BJ (cell line): ENCODE measurements at regions of chr4 and their contacts with region 1.

Region 1: DNA sequence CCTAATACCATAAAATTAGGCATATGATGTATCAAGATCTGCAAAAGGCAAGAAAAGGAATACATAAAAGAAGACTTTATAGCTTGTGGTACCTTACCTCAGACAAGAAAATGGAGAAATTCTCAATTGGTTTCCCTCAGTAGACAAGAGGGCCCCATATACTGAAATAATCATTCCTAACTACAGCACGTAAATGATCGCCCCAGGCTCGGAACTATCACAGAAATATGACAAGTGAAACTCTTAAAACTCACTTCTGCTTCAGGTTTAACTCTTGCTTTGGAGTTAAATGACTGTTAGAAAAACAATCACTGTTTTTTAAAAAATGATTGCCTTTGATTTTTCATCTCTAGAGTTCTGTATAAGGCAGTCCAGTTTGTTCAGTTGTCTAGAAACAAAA is 38.6 kb upstream of the NAP1L5 start:
- DNase-seq: no peak
- H3K4me3 ChIP-seq: no peak overlapping the region
- H3K27me3 ChIP-seq: no peaks in the 10 kb centered on the region
- CTCF ChIP-seq: no peak

Region 2: DNA sequence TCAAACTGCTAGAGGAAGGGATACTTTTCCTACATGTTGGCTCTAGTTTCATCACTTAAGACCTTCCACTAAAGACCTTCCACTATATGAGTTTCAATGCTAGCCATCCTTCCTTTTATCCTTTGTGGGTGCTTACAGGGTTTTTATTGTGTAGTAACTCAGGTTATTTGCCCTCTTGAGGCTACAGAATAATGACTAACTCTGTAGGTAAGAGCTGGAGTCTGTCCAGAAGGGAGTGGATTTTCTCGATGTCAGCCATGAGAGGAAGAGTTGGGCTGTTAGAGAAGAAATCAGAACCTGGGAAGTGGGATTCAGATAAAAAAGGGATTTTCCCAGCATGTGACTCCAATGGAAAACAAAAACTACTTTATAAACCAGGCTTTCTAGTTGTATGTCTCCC is 306.9 kb before region 1 on chr4:
- CTCF ChIA-PET with region 1: no interaction called
- POLR2A ChIA-PET with region 1: no interaction called
- DNase-seq: no peak
- H3K4me3 ChIP-seq: no peak overlapping the region
- H3K27me3 ChIP-seq: no peaks in the 10 kb centered on the region
- CTCF ChIP-seq: no peak

Region 3: DNA sequence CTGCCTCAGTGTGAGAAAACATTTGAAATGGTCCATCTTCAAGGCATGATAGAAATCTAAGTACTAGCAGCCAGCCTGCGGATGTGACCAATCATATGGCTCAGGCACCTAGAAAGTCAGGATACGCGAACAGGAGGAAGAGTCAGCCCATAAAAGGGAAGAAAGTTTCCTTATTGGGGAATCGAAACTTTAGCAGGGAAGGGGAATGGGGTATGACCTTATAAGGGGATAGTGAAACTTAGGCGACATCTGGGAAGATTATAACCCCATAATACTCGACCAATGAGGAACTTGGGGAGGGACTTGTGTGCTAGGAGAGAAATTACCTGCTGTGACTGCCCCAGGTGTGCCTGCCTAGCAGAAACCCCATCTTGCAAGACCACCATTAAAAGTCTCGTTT is 186.4 kb before region 1 on chr4:
- CTCF ChIA-PET with region 1: no interaction called
- POLR2A ChIA-PET with region 1: interaction called, 13 read pairs
- DNase-seq: no peak
- H3K4me3 ChIP-seq: no peak overlapping the region
- H3K27me3 ChIP-seq: no peaks in the 10 kb centered on the region
- CTCF ChIP-seq: no peak

Region 4: DNA sequence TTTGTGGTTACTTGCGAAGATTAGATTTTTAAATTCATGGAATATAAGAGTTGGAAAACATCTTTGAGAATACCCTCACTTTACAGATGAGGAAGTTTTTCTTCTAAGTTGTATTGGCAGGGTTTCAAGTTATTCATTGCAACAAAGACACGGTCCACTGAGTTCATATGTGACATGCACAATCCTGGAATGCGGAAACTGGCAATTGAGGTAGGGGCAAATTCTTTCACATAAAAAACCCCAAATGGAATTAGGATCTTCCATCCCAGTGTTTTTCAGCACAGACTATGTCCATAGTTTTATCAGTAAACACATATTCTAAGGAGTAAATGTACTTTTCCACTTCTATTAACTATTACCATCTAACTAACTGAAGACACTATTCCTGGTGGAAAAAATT is 43.2 kb after region 1 on chr4:
- CTCF ChIA-PET with region 1: no interaction called
- POLR2A ChIA-PET with region 1: no interaction called
- DNase-seq: no peak
- H3K4me3 ChIP-seq: no peak overlapping the region
- H3K27me3 ChIP-seq: no peaks in the 10 kb centered on the region
- CTCF ChIP-seq: no peak

Region 5: DNA sequence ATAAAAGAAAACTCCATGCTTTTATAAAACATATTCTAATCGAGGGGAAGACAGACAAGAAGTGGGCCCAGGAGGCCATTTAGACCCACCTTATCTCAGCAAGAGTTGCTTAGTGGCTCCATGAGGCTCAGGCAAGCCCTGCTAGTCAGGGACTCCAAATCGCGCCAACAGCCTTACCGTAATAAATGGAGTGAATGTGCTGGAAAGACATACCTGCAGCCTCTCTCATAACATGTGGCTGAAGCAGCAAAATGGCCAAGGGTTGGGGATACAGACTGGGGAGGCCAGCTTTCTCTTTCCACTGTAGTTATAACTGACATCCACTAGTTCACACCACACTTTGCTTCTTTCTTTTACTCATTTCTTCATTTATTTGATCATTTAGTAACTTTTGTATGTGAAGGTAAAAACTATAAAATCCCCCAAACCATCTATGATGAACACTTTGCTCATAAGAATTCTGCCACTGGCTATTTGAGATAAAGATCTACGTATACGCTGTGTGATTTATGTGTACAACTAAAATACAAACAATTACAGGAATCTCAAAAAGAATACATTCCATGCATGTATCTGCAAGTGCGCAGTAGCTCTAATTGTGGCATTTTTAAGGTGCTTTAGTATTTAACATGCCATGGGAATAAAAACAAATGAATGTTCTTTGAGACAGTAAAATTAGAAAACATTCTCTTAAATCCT is 118.1 kb after region 1 on chr4:
- CTCF ChIA-PET with region 1: no interaction called
- POLR2A ChIA-PET with region 1: no interaction called
- DNase-seq: no peak
- H3K4me3 ChIP-seq: no peak overlapping the region
- H3K27me3 ChIP-seq: no peaks in the 10 kb centered on the region
- CTCF ChIP-seq: no peak

Region 6: DNA sequence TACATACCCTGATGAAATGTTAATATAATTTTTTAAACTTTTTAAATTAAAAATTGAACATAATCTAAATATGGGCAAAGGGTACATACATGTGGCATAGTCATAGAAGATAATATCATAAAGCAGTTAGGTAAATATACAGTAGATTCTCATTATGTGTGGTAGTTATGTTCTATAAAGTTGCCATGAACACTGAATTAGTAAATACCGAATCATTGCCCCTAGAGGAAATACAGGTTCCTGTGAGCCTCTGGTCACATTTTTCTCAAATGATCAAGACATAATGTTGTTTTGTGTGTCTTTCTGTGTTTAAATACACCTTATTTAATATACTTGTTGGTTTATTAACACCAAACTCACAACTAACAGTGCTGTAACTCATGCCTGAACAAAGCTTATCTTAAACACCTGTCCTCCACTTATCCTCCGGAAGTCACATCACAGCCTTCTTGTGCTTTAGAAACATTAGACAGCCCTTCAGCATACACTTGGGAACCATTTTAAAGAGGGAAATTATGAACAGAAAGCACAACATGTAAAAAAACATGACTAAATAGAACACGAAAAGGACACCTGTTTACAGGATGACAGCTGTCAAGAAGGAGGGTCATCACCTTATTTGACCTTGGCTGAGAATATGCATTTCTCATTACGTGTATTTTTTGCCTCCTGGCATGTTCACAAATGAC is 130.7 kb after region 1 on chr4:
- CTCF ChIA-PET with region 1: no interaction called
- POLR2A ChIA-PET with region 1: no interaction called
- DNase-seq: peak; percentile 5
- H3K4me3 ChIP-seq: no peak overlapping the region
- H3K27me3 ChIP-seq: no peaks in the 10 kb centered on the region
- CTCF ChIP-seq: no peak